Sigmoid colon (tissue), 7 donors: ENCODE measurements at regions of chr19 and their contacts with region 1.

Region 1: DNA sequence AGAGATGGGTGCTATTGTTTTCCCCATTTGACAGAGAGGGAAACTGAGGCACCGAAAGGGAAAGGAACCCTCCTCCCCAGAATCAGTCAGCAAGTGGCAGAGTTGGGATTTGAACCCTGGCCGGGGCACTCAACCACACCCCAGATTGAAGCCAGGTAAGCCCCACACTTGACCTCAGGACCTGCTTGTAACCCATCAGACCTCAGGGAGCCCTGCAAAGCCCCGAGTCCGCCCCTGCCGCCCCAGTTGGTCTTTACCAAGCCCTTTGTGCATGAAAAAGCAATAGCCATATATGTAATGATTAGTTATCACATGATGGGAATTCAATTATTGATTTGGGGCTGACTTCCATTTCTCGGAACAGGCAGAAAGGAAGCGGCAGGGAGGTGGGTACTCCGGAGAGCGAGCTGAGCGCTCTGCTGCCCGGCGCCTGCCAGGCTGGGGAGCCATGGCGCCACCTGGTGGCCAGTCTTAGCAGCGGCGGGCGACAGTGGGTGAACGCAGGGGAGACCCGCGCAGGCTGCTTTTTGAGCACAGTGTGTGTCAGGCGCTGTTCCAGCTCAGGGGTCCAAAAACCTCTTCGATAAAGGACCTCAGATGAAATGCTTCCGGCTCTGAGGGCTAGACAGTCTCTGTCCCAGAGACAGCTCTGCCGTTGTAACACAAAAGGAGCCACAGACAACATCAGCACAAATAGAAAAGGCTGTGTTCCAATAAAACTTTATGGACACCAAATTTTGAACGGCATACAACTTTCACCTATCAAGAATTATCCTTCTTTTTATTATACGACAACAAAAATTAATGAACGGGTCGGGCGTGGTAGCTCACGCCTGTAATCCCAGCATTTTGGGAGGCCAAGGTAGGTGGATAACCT is 82.9 kb upstream of the CACNA1A start:
- DNase-seq: peak; percentile 72
- H3K4me3 ChIP-seq: no peak overlapping the region
- H3K27ac ChIP-seq: no peak overlapping the region
- H3K4me1 ChIP-seq: peaks cover 0 to 4% (median 0%) of the 10 kb centered on the region in 4 donors
- H3K27me3 ChIP-seq: peaks cover 3 to 47% (median 13%) of the 10 kb centered on the region in 3 donors
- CTCF ChIP-seq: peak; percentile 61 to 97 (median 82)
- EP300 ChIP-seq: no peak
- POLR2A ChIP-seq: no peak

Region 2: GRCh38 chr19:12974301-12975220 is 614.6 kb before region 1 on chr19:
- intact Hi-C with region 1: loop called (anchors 5 kb)
- DNase-seq: no peak
- H3K4me3 ChIP-seq: no peak overlapping the region
- H3K27ac ChIP-seq: no peak overlapping the region
- H3K4me1 ChIP-seq: peaks cover 0 to 10% (median 3%) of the 10 kb centered on the region in 4 donors
- H3K27me3 ChIP-seq: no peaks in the 10 kb centered on the region
- CTCF ChIP-seq: no peak
- EP300 ChIP-seq: no peak
- POLR2A ChIP-seq: no peak

Region 3: GRCh38 chr19:13277104-13277809 is 311.9 kb before region 1 on chr19:
- intact Hi-C with region 1: loop called (anchors 1 kb)
- DNase-seq: no peak
- H3K4me3 ChIP-seq: no peak overlapping the region
- H3K27ac ChIP-seq: no peak overlapping the region
- H3K4me1 ChIP-seq: no peaks in the 10 kb centered on the region
- H3K27me3 ChIP-seq: peaks cover 0 to 9% (median under 1%) of the 10 kb centered on the region in 3 donors
- CTCF ChIP-seq: peak; percentile 51 to 59 (median 56)
- EP300 ChIP-seq: no peak
- POLR2A ChIP-seq: no peak